Posterior vena cava (tissue), 2 donors: ENCODE measurements at regions of chr2 and their contacts with region 1.

Region 1: DNA sequence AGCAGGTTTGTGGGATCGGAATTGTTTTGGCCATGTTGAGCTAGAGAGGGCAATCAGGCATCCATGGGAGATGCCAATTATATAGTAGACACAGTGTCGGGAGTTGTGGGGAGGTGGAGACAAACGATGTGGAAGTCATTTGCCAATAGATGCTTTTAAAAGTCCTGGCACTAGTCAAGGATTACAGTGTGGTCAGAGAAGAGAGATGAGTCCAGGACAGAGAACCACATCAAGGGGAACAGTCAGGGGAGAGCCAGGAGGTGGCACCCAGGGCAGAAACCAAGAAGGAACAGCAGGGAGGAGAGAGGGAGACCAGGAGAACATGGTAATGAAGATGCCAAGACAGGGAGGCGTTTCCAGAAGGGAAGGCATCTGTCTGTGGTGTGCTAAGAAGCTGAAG is 81.2 kb downstream of the ARL4C start:
- DNase-seq: no peak

Region 2: GRCh38 chr2:234348081-234348480 is 67.6 kb before region 1 on chr2:
- intact Hi-C with region 1: no loop called
- DNase-seq: no peak

Region 3: DNA sequence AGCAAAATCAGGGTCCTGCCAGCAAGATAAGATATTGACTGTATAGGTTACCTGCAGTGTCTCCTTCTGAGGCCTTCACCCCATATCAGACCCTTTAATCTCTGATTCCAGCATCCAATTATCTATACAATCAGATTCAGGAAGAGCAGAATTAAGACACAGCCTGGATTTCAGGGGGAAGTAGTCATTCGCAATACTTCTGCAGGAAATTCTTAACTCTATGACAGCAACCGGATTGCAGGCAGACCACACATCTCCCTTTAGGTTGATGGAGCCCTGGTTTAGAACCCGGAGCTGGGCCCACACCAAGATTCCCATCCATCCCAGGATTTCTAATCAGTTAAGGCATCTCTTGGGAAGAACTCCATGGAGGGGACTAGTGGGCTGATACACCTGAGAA is 71.7 kb after region 1 on chr2:
- intact Hi-C with region 1: loop called in 1 of 2 experiments (anchors 2 kb)
- DNase-seq: no peak